Activated naive CD8-positive, alpha-beta T cell treated with anti-CD3 and anti-CD28 coated beads, Interleukin-2, amount 10 ng/mL, durations not matched to agents 7 days and 5 days (primary cell): ENCODE measurements at regions of chr9 and their contacts with region 1.

Region 1: GRCh38 chr9:128034821-128035764 is 32.0 kb downstream of the NAIF1 start:
- DNase-seq: peak; percentile 66
- ATAC-seq: peak; percentile 62
- H3K4me3 Mint-ChIP-seq: no peak overlapping the region
- H3K27ac Mint-ChIP-seq: peak overlapping the region; percentile 76
- H3K4me1 Mint-ChIP-seq: peaks cover 28% of the 10 kb centered on the region
- H3K27me3 Mint-ChIP-seq: no peaks in the 10 kb centered on the region

Region 2: DNA sequence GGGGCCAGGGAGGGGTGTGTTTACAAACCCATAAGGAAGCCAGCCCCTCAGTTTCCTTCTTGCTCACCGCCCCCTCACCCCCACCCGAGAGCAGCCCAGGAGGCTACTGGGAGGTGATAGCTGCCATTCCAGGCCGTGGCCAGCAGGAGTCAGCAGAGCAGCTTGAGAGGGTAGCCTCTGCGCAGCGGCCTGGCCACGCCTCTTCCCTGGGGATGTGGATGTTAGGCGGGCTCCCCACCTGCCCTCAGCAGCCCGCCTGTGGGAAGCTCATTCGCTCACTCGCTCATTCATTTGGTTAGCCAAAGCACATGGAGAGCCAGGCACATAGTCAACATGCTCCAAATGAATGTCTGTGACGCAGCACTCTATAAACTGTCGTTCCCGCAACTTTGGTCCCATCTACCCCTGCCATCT is 91.4 kb before region 1 on chr9:
- POLR2A ChIA-PET with region 1: interaction called, 11 read pairs
- DNase-seq: peak; percentile 82
- ATAC-seq: peak; percentile 68
- H3K4me3 Mint-ChIP-seq: no peak overlapping the region
- H3K27ac Mint-ChIP-seq: peak overlapping the region; percentile 52
- H3K4me1 Mint-ChIP-seq: peaks cover 13% of the 10 kb centered on the region
- H3K27me3 Mint-ChIP-seq: no peaks in the 10 kb centered on the region

Region 3: GRCh38 chr9:128117613-128118471 is 82.7 kb after region 1 on chr9:
- POLR2A ChIA-PET with region 1: no interaction called
- DNase-seq: peak; percentile 99
- ATAC-seq: peak; percentile 82
- H3K4me3 Mint-ChIP-seq: no peak overlapping the region
- H3K27ac Mint-ChIP-seq: peak overlapping the region; percentile 21
- H3K4me1 Mint-ChIP-seq: peaks cover 8% of the 10 kb centered on the region
- H3K27me3 Mint-ChIP-seq: no peaks in the 10 kb centered on the region